ENCODE measurements at regions of chr3 and their contacts with region 1.

Region 1: GRCh38 chr3:126394575-126395228 is at the start of gene CFAP100:
- DNase-seq: peak; percentile 24
- H3K4me3 ChIP-seq: peak within 1 kb of the TSS in 1 of 4 donors; percentile 40
- H3K27ac ChIP-seq: no peak within 1 kb of the TSS
- H3K4me1 ChIP-seq: peaks cover 0 to 8% (median 2%) of the 10 kb centered on the region in 4 donors
- H3K27me3 ChIP-seq: peaks cover 25% of the 10 kb centered on the region
- CTCF ChIP-seq: no peak
- EP300 ChIP-seq: no peak
- POLR2A ChIP-seq: no peak
- total RNA-seq, gene CFAP100: not detected

Region 2: GRCh38 chr3:126134219-126134975 is 260.3 kb before region 1 on chr3:
- in situ Hi-C with region 1: loop called in 3 of 4 experiments (anchors 5 to 25 kb)
- intact Hi-C with region 1: no loop called
- DNase-seq: peak; percentile 65
- H3K4me3 ChIP-seq: no peak overlapping the region
- H3K27ac ChIP-seq: no peak overlapping the region
- H3K4me1 ChIP-seq: peaks cover 0 to 2% (median 0%) of the 10 kb centered on the region in 4 donors
- H3K27me3 ChIP-seq: peaks cover 4% of the 10 kb centered on the region
- CTCF ChIP-seq: peak; percentile 74 to 84 (median 82)
- EP300 ChIP-seq: no peak
- POLR2A ChIP-seq: no peak

Region 3: DNA sequence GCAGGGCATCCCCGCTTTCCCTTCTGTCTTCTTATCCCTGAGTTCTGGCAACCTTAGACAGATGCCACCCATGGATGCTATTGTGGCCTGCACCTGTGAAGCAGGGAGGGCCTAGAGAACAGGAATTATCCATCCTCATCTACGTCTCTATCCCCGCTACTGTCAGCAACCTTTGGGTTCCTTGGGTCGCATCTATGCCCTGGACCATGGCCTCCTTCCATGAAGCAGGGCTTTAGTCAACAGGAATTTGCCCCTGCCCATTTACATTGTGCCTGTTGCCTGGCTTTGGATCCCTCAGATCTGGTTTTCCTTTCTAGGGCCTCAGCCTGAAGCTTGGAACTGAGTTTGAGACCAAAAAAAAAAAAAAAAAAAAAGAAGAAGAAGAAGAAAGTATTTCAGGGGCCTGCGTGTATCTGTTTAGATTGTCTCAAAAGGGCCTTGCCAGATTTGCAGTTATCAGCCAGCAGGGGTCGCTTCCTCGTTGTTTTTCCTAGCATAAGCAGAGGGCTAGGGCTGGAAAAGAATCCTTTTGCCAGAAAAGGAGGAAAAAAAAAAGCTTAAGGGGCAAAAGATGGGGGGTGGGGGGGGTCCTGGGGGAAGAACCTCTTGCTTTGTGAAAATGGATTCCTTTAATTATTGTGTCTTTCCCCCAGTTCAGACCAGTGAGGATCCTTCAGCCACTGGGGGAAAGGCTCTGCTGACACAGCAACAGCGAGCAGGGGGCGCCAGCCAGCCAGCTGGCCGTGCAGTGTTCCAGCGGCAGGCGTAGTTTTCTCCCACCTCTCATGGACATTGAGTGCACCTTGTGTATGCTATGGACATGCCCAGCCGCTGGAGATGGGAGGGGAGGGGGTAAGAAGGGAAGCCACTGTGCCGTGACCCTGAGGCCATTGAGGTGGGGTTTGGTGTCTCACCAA is 148.6 kb before region 1 on chr3:
- in situ Hi-C with region 1: loop called (anchors 5 to 10 kb)
- intact Hi-C with region 1: no loop called
- DNase-seq: peak; percentile 45
- H3K4me3 ChIP-seq: no peak overlapping the region
- H3K27ac ChIP-seq: no peak overlapping the region
- H3K4me1 ChIP-seq: no peaks in the 10 kb centered on the region
- H3K27me3 ChIP-seq: no peaks in the 10 kb centered on the region
- CTCF ChIP-seq: peak; percentile 22 to 50 (median 45)
- EP300 ChIP-seq: no peak
- POLR2A ChIP-seq: no peak

Region 4: GRCh38 chr3:126252373-126252772 is 142.3 kb before region 1 on chr3:
- in situ Hi-C with region 1: loop called (anchors 5 to 10 kb)
- intact Hi-C with region 1: no loop called
- DNase-seq: no peak
- H3K4me3 ChIP-seq: no peak overlapping the region
- H3K27ac ChIP-seq: no peak overlapping the region
- H3K4me1 ChIP-seq: no peaks in the 10 kb centered on the region
- H3K27me3 ChIP-seq: no peaks in the 10 kb centered on the region
- CTCF ChIP-seq: no peak
- EP300 ChIP-seq: no peak
- POLR2A ChIP-seq: no peak

Region 5: DNA sequence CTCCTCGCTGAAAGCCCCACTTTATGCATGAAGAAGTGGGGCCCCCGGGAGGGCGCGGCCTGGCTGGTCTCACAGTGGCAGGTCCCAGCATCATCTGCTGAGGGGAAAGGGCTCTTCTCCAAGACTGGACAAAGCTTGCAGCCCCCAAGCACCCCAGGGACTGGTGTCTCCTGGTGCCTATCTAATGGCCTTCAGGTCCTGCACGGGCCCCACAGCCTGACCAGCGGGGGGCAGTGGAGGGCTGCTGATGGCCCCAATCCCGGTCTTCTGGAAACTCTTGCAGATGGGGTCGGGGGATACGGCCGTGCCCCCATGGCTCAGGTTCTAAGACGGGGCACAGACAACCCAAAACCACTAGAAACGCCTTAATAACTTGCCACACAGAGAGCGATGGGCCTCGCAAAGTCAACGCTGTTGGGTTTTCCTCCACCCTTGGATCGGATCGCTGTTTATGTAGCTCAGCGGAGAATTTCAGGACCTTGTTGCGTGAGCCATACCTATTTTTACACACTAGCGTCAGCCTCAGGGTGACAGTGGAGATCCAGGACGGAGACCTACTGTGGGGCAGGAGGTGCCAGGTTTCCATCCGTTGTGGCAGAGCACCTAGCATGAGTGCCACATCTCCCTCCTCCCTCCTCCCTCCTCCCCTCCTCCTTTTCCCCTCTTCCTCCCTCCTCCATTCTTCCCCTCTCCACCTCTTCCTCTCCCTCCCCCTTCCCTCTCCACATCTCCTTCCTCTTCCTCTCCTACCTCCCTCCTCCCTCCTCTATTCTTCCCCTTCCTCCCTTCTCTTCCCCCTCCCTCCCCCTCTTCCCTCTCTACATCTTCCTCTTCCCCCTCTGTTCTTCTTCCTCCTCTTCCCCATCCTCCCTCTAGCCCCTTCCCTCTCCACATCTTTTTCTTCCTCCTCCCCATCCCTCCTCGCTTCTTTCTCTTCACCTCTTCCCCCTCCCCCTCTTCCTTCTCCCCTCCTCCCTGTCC is 135.0 kb before region 1 on chr3:
- in situ Hi-C with region 1: loop called in 3 of 4 experiments (anchors 5 to 10 kb)
- intact Hi-C with region 1: loop called (anchors 1 kb)
- DNase-seq: peak; percentile 46
- H3K4me3 ChIP-seq: no peak overlapping the region
- H3K27ac ChIP-seq: no peak overlapping the region
- H3K4me1 ChIP-seq: no peaks in the 10 kb centered on the region
- H3K27me3 ChIP-seq: no peaks in the 10 kb centered on the region
- CTCF ChIP-seq: peak; percentile 55 to 60 (median 59)
- EP300 ChIP-seq: no peak
- POLR2A ChIP-seq: no peak

Region 6: DNA sequence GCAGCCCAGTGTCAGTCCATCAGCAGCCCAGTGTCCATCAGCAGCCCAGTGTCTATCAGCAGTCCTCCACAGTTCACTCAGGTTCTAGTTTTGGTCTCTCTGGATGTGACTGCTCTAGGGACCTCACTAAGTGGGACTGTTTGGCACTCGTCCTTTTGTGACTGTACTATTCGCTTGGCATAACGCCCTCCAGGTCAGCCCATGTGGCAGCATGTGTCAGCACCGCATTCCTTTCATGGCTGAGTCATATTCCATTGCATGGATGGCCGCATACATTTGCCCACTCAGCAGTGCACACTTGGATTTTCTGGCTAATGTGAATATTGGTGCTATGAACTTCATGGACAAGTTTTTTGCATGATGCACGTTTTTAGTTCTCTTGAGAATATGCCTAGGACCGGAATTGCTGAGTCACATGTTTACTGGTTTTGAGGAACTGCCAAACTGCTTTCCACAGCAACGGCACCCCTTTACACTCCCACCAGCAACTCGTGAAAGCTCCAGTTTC is 145.7 kb after region 1 on chr3:
- in situ Hi-C with region 1: no loop called
- intact Hi-C with region 1: no loop called
- DNase-seq: peak; percentile 20
- H3K4me3 ChIP-seq: no peak overlapping the region
- H3K27ac ChIP-seq: no peak overlapping the region
- H3K4me1 ChIP-seq: no peaks in the 10 kb centered on the region
- H3K27me3 ChIP-seq: peaks cover 18% of the 10 kb centered on the region
- CTCF ChIP-seq: no peak
- EP300 ChIP-seq: no peak
- POLR2A ChIP-seq: no peak

Region 7: DNA sequence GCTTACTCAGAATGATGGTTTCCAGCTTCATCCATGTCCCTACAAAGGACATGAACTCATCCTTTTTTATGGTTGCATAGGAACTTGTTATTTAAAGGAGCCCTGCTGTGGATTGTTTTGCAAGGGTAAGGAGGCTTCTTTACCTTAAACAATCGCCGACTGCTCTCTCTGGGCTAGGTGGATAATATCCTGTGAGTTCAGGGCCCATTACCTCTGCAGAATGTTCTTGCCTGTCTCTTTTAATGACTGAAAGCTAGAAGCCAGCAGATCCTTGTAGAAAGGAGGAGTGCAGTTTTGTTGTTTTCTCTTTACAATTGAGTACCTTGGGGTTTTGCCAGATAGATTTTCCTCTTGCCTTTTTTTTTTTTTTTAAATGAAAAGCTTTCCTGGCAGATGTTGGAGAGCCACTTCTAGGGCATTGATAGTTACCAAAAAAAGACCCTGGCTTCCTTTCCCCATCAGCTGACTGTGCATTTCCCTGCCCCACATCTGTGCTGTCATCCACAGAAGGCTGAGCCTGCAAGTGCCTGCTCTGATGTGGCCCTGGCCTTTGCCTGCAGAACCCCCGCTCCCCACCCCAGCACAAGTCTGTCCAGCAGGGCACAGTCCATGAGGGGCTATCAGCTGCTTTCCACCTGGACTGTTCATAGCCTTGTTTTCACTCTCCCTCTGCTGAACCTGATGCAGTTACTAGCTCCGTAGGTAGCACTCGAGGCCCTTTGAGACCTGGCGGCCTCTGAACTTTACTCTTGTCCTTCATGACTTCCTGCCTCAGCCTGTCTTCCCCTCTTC is 422.5 kb after region 1 on chr3:
- in situ Hi-C with region 1: no loop called
- intact Hi-C with region 1: no loop called
- DNase-seq: no peak
- H3K4me3 ChIP-seq: no peak overlapping the region
- H3K27ac ChIP-seq: no peak overlapping the region
- H3K4me1 ChIP-seq: peaks cover 0 to 8% (median 7%) of the 10 kb centered on the region in 4 donors
- H3K27me3 ChIP-seq: no peaks in the 10 kb centered on the region
- CTCF ChIP-seq: no peak
- EP300 ChIP-seq: no peak
- POLR2A ChIP-seq: no peak